Esophagus squamous epithelium (tissue), 5 donors: ENCODE measurements at regions of chr16 and their contacts with region 1.

Region 1: GRCh38 chr16:10579965-10580882 is at the start of gene EMP2:
- DNase-seq: no peak
- H3K4me3 ChIP-seq: peak within 1 kb of the TSS; percentile 79 to 95 (median 94)
- H3K27ac ChIP-seq: peak within 1 kb of the TSS; percentile 97 to 98 (median 97)
- H3K4me1 ChIP-seq: peaks cover 28 to 58% (median 37%) of the 10 kb centered on the region in 3 donors
- H3K27me3 ChIP-seq: peaks cover 0 to 12% (median 0%) of the 10 kb centered on the region in 4 donors
- CTCF ChIP-seq: peak in 5 of 6 experiments; percentile 42 to 76 (median 61)
- POLR2A ChIP-seq: peak in 3 of 4 donors; percentile 61 to 84 (median 62)
- total RNA-seq, gene EMP2: 108 to 121 (median 109) TPM

Region 2: DNA sequence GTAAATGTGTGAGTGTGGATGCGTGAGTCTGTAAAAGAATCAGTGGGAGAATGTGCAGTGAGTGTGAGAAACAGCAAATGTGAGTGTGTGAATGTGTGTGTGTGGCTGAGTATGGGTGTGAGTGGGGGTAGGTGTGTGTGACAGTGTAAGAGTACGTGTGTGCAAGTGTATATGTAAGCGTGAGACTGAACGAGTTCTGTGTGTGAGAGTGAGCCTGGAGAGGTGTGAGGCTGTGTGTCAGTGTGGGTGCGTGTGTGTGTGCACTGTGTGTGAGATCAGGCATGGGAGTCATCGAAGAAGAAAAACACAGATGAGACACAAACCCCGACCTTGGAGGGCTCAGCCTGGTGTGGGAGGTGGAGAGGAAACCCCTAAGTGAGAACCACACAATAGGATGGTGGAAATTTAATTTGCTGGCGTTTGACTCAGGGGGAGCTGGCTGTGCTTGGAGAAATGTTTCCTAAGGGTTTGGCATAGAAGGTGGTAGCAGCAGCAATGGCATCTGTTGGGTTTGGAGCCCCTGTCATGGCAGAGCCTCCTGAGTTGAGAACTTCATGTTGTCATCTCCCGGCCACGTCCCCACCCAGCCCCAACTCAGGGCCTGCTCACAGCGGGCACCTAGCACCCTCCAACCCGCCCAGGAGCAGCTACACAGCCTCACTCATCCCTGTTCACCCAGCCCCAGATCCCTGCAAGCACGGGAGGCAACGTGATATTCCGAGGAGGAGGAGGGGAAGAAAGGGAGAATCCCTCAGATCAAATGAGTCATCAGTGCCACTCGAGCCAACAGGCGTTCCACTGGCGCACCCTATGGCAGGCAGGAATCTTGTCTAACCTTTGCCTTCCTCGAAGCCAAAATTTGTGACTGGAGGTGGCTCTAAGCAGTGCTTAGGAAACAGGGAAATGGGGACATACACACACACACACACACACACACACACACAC is 149.2 kb after region 1 on chr16:
- intact Hi-C with region 1: loop called (anchors 5 kb)
- DNase-seq: no peak
- H3K4me3 ChIP-seq: no peak overlapping the region
- H3K27ac ChIP-seq: no peak overlapping the region
- H3K4me1 ChIP-seq: peaks cover 0 to 12% (median 0%) of the 10 kb centered on the region in 3 donors
- H3K27me3 ChIP-seq: no peaks in the 10 kb centered on the region
- CTCF ChIP-seq: peak in 1 of 6 experiments; percentile 29
- POLR2A ChIP-seq: no peak

Region 3: GRCh38 chr16:10876799-10877341 is 296.6 kb after region 1 on chr16 and contains the start of gene CIITA:
- intact Hi-C with region 1: no loop called
- DNase-seq: peak; percentile 50
- H3K4me3 ChIP-seq: peak within 1 kb of the TSS in 2 of 4 donors; percentile 52 to 80
- H3K27ac ChIP-seq: peak within 1 kb of the TSS in 3 of 4 donors; percentile 6 to 72 (median 59)
- H3K4me1 ChIP-seq: peaks cover 12 to 49% (median 25%) of the 10 kb centered on the region in 3 donors
- H3K27me3 ChIP-seq: peaks cover 0 to 46% (median 0%) of the 10 kb centered on the region in 4 donors
- CTCF ChIP-seq: peak in 1 of 6 experiments; percentile 4
- POLR2A ChIP-seq: peak in 1 of 4 donors; percentile 68
- total RNA-seq, gene CIITA: 3.2 to 12.6 (median 5.7) TPM